HEK293 (cell line): ENCODE measurements at regions of chr1 and their contacts with region 1.

Region 1: GRCh38 chr1:32933742-32934322 is 30.8 kb downstream of the RNF19B start:
- H3K4me3 ChIP-seq: no peak overlapping the region
- H3K27ac ChIP-seq: no peak overlapping the region
- H3K4me1 ChIP-seq: no peaks in the 10 kb centered on the region
- CTCF ChIP-seq: no peak

Region 2: DNA sequence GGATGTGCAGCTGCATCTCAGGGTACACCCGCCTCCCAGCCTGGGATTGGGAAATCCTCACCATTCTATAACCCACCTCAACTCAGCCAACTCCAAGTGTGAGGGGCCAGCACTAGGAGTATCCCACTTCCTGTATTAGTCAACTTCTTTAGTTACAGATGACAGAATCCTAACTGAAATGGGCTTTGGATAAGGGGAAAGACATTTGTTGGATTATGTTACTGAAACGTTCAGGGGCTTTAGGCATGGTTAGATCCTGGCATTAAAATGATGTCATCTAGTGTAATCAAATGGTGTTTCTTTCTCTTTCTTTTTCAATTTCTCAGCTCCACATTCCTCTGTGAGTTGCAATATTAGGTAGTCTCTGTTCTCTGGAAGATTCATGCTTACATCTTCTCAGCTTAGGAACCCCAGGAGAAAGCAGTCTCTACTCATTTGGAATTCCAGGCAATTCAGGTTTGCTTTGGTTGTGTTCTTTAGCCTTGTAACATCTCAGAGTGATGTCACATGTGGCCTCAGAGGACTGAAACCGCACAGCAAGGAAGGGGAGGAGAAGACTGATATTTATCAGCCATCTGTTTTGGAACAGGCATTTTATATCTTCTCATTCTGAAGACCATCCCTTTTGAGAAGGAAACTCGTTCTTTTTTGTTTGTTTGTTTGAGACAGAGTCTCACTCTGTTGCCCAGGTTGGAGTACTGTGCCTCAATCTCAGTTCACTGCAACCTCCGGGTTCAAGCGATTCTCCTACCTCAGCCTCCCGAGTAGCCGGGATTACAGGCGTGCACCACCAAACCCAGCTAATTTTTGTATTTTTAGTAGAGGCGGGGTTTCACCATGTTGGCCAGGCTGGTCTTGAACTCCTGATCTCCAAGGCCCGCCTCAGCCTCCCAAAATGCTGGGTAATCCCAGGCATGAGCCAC is 13.8 kb before region 1 on chr1:
- CTCF ChIA-PET with region 1: interaction called, 15 read pairs
- POLR2A ChIA-PET with region 1: no interaction called
- H3K4me3 ChIP-seq: no peak overlapping the region
- H3K27ac ChIP-seq: no peak overlapping the region
- H3K4me1 ChIP-seq: no peaks in the 10 kb centered on the region
- CTCF ChIP-seq: no peak

Region 3: GRCh38 chr1:33007190-33008050 is 73.6 kb after region 1 on chr1:
- CTCF ChIA-PET with region 1: interaction called, 71 read pairs
- POLR2A ChIA-PET with region 1: no interaction called
- H3K4me3 ChIP-seq: no peak overlapping the region
- H3K27ac ChIP-seq: no peak overlapping the region
- H3K4me1 ChIP-seq: peaks cover 3% of the 10 kb centered on the region; the same call in 1 of the 2 replicates
- CTCF ChIP-seq: peak; percentile 76

Region 4: DNA sequence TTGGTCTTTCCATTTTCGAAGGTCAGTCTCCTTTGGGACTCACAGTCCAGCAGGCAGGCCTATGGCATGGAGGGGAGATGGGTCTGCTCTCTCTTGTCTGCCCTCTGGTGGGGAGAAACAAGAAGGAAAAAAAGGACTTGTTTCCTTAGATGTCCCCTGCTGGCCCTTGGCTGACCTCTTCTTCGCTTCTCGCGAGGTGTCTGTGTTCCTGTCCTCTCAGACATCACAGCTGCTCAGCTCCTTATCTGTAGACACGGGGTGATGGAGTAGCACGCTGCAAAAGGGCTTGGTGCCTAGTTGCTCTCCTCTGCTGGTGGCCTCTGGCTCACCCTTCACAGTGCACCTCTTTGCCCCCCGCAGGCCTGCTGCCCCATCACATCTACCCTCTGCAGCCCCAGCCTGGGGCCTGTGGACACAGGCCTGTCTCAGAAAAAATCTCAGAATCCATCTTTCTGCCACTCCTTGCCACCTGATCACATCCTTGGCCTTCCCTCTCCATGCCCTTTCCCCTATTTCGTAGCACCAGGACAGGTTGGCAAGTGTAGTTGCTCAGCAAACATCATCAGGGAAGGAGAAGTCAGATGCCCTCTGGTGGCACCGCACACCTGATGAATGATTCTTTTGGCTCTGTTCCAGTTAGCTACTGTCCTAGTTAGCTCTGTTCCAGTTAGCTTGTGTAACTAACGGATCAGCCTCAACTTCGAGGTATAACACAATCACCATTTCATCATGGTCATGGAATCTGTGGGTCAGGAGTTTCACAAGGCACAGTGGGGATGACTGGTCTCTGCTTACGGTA is 121.6 kb after region 1 on chr1:
- CTCF ChIA-PET with region 1: interaction called, 47 read pairs
- POLR2A ChIA-PET with region 1: no interaction called
- H3K4me3 ChIP-seq: no peak overlapping the region
- H3K27ac ChIP-seq: no peak overlapping the region
- H3K4me1 ChIP-seq: no peaks in the 10 kb centered on the region
- CTCF ChIP-seq: peak; percentile 66

Region 5: DNA sequence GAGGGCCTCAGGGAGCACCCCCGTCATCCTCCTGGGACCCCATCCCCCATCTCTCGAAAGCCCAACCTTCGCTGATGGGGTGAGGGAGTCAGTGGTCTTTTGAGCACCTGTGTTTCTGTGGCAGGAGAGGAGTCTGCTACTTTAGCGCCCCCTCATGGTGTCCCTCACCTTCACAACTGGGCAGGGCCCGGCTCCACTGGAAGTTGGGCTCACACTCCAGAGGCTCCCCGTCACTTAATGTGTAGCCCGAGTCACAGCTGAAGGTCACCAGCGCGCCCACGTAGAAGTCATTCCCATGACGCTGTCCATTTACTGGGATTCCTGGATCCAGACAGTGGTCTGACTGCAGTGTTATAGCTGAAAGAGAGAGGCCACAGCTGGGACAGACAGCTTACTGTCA is 790.5 kb after region 1 on chr1:
- CTCF ChIA-PET with region 1: no interaction called
- POLR2A ChIA-PET with region 1: no interaction called
- H3K4me3 ChIP-seq: no peak overlapping the region
- H3K27ac ChIP-seq: no peak overlapping the region
- H3K4me1 ChIP-seq: no peaks in the 10 kb centered on the region
- CTCF ChIP-seq: no peak